ENCODE measurements at regions of chr17 and their contacts with region 1.

Region 1: GRCh38 chr17:49707608-49708514 is at the start of gene SLC35B1:
- DNase-seq: peak; percentile 99
- ATAC-seq: peak; percentile 93
- H3K4me3 ChIP-seq: peak within 1 kb of the TSS; percentile 76 to 95 (median 83)
- H3K27ac ChIP-seq: peak within 1 kb of the TSS; percentile 93
- H3K4me1 ChIP-seq: peaks cover 54% of the 10 kb centered on the region
- H3K27me3 ChIP-seq: no peaks in the 10 kb centered on the region; a peak in 1 of 5 replicates
- CTCF ChIP-seq: peak; percentile 98
- EP300 ChIP-seq: peak; percentile 13 to 27; a peak in 3 of 4 replicates
- POLR2A ChIP-seq: peak; percentile 58 to 87; a peak in 3 of 4 replicates
- RAD21 ChIP-seq: peak; percentile 69
- total RNA-seq, gene SLC35B1: 67.0 and 113 TPM in 2 replicates

Region 2: GRCh38 chr17:49434821-49435670 is 272.8 kb before region 1 on chr17:
- CTCF ChIA-PET with region 1: no interaction called
- POLR2A ChIA-PET with region 1: no interaction called
- in situ Hi-C with region 1: loop called (anchors 10 kb)
- intact Hi-C with region 1: no loop called
- DNase-seq: peak; percentile 74
- ATAC-seq: peak; percentile 80
- H3K4me3 ChIP-seq: no peak overlapping the region
- H3K27ac ChIP-seq: no peak overlapping the region
- H3K4me1 ChIP-seq: peaks cover 44% of the 10 kb centered on the region
- H3K27me3 ChIP-seq: peaks cover 4 to 57% of the 10 kb centered on the region in 2 experiments
- CTCF ChIP-seq: peak; percentile 83
- EP300 ChIP-seq: no peak
- POLR2A ChIP-seq: no peak
- RAD21 ChIP-seq: peak; percentile 63; the same call in 1 of the 2 replicates

Region 3: GRCh38 chr17:49763735-49764558 is 56.1 kb after region 1 on chr17 and contains the start of gene FAM117A:
- CTCF ChIA-PET with region 1: no interaction called
- POLR2A ChIA-PET with region 1: interaction called, 46 read pairs
- in situ Hi-C with region 1: no loop called
- intact Hi-C with region 1: no loop called
- DNase-seq: peak; percentile 100
- ATAC-seq: peak; percentile 98
- H3K4me3 ChIP-seq: peak within 1 kb of the TSS; percentile 73 to 97 (median 90)
- H3K27ac ChIP-seq: peak within 1 kb of the TSS; percentile 47
- H3K4me1 ChIP-seq: peaks cover 24% of the 10 kb centered on the region
- H3K27me3 ChIP-seq: no peaks in the 10 kb centered on the region
- CTCF ChIP-seq: no peak
- EP300 ChIP-seq: no peak
- POLR2A ChIP-seq: peak; percentile 93 to 97
- RAD21 ChIP-seq: no peak
- total RNA-seq, gene FAM117A: 12.1 and 12.3 TPM in 2 replicates

Region 4: GRCh38 chr17:49788478-49789242 is 80.8 kb after region 1 on chr17 and contains the start of gene KAT7:
- CTCF ChIA-PET with region 1: no interaction called
- POLR2A ChIA-PET with region 1: interaction called, 17 read pairs
- in situ Hi-C with region 1: no loop called
- intact Hi-C with region 1: loop called (anchors 1 kb)
- DNase-seq: peak; percentile 99
- ATAC-seq: peak; percentile 98
- H3K4me3 ChIP-seq: peak within 1 kb of the TSS; percentile 82 to 100 (median 97)
- H3K27ac ChIP-seq: peak within 1 kb of the TSS; percentile 98
- H3K4me1 ChIP-seq: peaks cover 26% of the 10 kb centered on the region
- H3K27me3 ChIP-seq: no peaks in the 10 kb centered on the region
- CTCF ChIP-seq: no peak; the same call in 1 of the 2 replicates
- EP300 ChIP-seq: no peak; a peak in 1 of 4 replicates
- POLR2A ChIP-seq: peak; percentile 94 to 99
- RAD21 ChIP-seq: peak; percentile 47; the same call in 1 of the 2 replicates
- total RNA-seq, gene KAT7: 39.2 and 43.8 TPM in 2 replicates

Region 5: GRCh38 chr17:49997791-49998703 is 290.2 kb after region 1 on chr17:
- CTCF ChIA-PET with region 1: no interaction called
- POLR2A ChIA-PET with region 1: no interaction called
- in situ Hi-C with region 1: loop called (anchors 5 kb)
- intact Hi-C with region 1: loop called (anchors 5 kb)
- DNase-seq: peak; percentile 92
- ATAC-seq: peak; percentile 88
- H3K4me3 ChIP-seq: peak overlapping the region in 1 of 3 experiments; percentile 38; a peak in 1 of 6 replicates
- H3K27ac ChIP-seq: no peak overlapping the region
- H3K4me1 ChIP-seq: peaks cover 45% of the 10 kb centered on the region
- H3K27me3 ChIP-seq: peaks cover 15 to 67% of the 10 kb centered on the region in 2 experiments
- CTCF ChIP-seq: peak; percentile 98
- EP300 ChIP-seq: no peak
- POLR2A ChIP-seq: no peak
- RAD21 ChIP-seq: peak; percentile 98

Measured in HepG2 (cell line).